CD8-positive, alpha-beta T cell (primary cell): ENCODE measurements at regions of chr19 and their contacts with region 1.

Region 1: DNA sequence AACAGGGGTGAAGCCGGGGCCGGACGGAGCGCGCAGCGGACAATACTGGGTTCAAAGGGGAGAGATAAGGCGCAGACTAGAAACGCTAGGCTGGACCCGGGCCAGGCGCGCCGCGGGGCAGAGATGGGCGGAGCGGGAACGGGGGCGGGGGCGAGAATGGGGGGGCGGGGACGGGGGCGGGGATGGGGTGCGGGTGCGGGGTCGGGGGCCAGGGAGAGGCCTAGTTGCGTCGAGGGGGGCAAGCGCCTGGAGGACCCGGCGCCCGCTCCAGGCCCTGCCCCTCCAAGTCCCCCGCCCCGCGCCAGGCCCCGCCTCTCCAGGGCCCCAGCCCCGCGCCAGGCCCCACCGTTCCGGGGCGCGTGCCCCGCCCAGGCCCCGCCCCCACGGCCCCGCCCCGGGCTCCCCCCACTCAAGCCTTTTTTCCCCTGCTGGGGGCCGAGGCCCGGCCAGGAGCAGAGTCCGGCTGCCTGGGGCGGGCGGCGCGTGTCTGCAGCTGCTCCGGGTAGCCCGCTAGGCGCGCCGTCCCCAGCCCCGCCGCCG is at the start of gene CERS4:
- DNase-seq: peak; percentile 43 to 87 (median 75)
- ATAC-seq: peak; percentile 85
- H3K4me3 ChIP-seq: peak within 1 kb of the TSS; percentile 75 to 86
- H3K4me3 Mint-ChIP-seq: peak within 1 kb of the TSS; percentile 85
- H3K27ac ChIP-seq: peak within 1 kb of the TSS; percentile 51 to 72
- H3K27ac Mint-ChIP-seq: peak within 1 kb of the TSS; percentile 87
- H3K4me1 ChIP-seq: peaks cover 22% of the 10 kb centered on the region
- H3K4me1 Mint-ChIP-seq: peaks cover 26% of the 10 kb centered on the region
- H3K27me3 ChIP-seq: no peaks in the 10 kb centered on the region
- H3K27me3 Mint-ChIP-seq: no peaks in the 10 kb centered on the region
- CTCF ChIP-seq: no peak
- total RNA-seq, gene CERS4: 6.9 to 7.2 TPM

Region 2: DNA sequence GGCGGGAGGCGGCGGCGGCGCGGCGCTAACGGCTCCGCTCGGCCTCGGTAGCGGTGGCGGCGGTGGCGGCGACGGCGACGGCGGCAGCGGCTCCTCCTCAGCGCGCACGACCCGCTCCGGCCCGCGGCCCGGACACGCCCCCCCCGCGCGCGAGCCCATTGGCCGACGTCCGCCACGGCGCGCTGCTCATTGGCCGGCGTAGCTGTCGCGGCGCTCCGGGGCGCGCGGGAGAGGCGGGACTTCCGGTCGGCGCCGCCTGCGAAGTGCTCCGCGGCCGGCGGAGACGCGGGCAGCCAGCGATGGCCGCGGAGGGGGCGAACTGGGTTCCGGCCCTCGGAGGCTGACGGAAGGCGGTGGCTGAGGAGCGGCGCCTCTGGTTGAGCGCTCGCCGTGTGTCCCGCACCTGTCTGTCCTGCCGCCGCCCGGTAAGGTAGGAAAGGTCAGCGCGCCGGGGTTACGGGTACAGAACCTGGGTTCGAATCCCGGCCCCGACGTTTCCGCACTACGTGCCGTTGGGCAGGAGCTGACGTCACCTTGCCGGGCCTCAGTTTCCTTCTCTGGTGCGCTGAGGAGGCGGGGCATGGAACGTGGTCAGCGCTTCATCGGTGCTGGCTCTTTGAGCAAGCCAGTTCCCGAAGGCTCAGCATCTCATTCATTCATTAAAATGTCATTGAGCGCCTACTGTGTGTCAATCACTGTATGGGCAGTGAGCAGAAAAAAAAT is 203.3 kb before region 1 on chr19 and contains the start of gene ELAVL1:
- CTCF ChIA-PET with region 1: interaction called, 6 read pairs
- POLR2A ChIA-PET with region 1: no interaction called
- intact Hi-C with region 1: loop called in 1 of 2 experiments (anchors 1 kb)
- DNase-seq: peak; percentile 78 to 95 (median 87)
- ATAC-seq: peak; percentile 91
- H3K4me3 ChIP-seq: peak within 1 kb of the TSS; percentile 66 to 87
- H3K4me3 Mint-ChIP-seq: peak within 1 kb of the TSS; percentile 85
- H3K27ac ChIP-seq: peak within 1 kb of the TSS; percentile 70
- H3K27ac Mint-ChIP-seq: peak within 1 kb of the TSS; percentile 81
- H3K4me1 ChIP-seq: peaks cover 38% of the 10 kb centered on the region
- H3K4me1 Mint-ChIP-seq: peaks cover 38% of the 10 kb centered on the region
- H3K27me3 ChIP-seq: no peaks in the 10 kb centered on the region
- H3K27me3 Mint-ChIP-seq: no peaks in the 10 kb centered on the region
- CTCF ChIP-seq: no peak
- total RNA-seq, gene ELAVL1: 19.9 to 23.5 TPM

Region 3: GRCh38 chr19:8158411-8159074 is 50.4 kb before region 1 on chr19:
- CTCF ChIA-PET with region 1: interaction called, 4 read pairs
- POLR2A ChIA-PET with region 1: no interaction called
- intact Hi-C with region 1: loop called in 1 of 2 experiments (anchors 1 kb)
- DNase-seq: peak in 7 of 9 experiments; percentile 21 to 84 (median 42)
- ATAC-seq: peak; percentile 40
- H3K4me3 ChIP-seq: no peak overlapping the region
- H3K4me3 Mint-ChIP-seq: no peak overlapping the region
- H3K27ac ChIP-seq: no peak overlapping the region
- H3K27ac Mint-ChIP-seq: no peak overlapping the region
- H3K4me1 ChIP-seq: no peaks in the 10 kb centered on the region
- H3K4me1 Mint-ChIP-seq: no peaks in the 10 kb centered on the region
- H3K27me3 ChIP-seq: peaks cover 0 to 3% of the 10 kb centered on the region in 2 experiments
- H3K27me3 Mint-ChIP-seq: peaks cover 21% of the 10 kb centered on the region
- CTCF ChIP-seq: peak; percentile 62

Region 4: DNA sequence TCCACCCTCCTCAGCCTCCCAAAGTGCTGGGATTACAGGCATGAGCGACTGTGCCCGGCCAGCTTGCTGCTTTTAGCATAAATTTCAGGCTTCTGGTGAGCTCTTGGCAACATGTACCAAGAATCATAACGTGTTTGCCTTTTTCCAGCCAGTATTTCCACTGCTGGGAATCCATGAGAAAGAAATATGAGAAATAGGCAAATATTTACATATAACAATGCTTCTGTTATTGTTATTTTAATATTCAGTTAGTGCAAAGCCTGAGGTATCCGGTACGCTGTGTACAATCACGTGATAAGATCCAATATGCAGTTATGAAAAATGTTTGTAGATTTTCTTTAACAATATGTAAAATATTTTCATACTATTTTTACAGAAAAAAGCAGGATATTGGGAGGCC is 28.9 kb before region 1 on chr19:
- CTCF ChIA-PET with region 1: no interaction called
- POLR2A ChIA-PET with region 1: interaction called, 6 read pairs
- intact Hi-C with region 1: loop called in 1 of 2 experiments (anchors 2 kb)
- DNase-seq: no peak
- ATAC-seq: no peak
- H3K4me3 ChIP-seq: no peak overlapping the region
- H3K4me3 Mint-ChIP-seq: no peak overlapping the region
- H3K27ac ChIP-seq: no peak overlapping the region
- H3K27ac Mint-ChIP-seq: no peak overlapping the region
- H3K4me1 ChIP-seq: peaks cover 14% of the 10 kb centered on the region
- H3K4me1 Mint-ChIP-seq: peaks cover 9% of the 10 kb centered on the region
- H3K27me3 ChIP-seq: no peaks in the 10 kb centered on the region
- H3K27me3 Mint-ChIP-seq: no peaks in the 10 kb centered on the region
- CTCF ChIP-seq: no peak

Region 5: DNA sequence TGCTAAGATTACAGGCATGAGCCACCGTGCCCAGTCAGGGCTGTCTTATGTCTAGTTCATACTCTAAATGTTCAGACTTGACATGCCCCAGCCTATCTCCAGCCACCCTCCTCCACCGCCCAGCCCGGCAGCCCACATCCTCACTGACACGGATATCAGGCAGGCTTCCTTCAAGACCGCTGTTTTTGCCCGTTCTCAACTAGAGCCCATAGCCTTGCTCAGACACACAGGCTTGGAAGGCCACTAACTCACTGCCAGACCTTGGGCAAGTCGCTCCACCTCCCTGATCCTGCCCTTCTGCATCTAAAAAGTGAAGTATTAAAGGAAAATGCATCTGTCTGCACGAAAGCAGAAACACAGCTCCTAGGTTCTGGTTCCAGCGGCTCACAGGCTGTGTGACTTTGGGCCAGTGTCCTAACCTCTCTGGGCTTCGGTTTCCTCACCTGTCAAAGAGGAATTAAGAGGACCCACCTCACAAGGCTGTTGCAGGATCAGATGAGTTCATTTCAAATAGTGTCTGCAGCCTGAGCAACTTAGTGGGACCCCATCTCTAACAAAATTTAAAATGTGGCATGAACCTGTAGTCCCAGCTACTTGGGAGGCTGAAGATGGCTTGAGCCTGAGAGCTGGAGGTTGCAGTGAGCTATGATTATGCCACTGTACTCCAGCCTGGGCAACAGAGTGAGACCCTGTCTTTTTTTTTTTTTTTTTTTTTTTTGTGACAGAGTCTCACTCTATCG is 14.3 kb before region 1 on chr19:
- CTCF ChIA-PET with region 1: interaction called, 6 read pairs
- POLR2A ChIA-PET with region 1: interaction called, 6 read pairs
- intact Hi-C with region 1: loop called in 1 of 2 experiments (anchors 2 kb)
- DNase-seq: peak; percentile 23 to 79 (median 55)
- ATAC-seq: peak; percentile 63
- H3K4me3 ChIP-seq: peak overlapping the region in 1 of 2 experiments; percentile 1
- H3K4me3 Mint-ChIP-seq: peak overlapping the region; percentile 75
- H3K27ac ChIP-seq: peak overlapping the region; percentile 5 to 89
- H3K27ac Mint-ChIP-seq: peak overlapping the region; percentile 93
- H3K4me1 ChIP-seq: peaks cover 33% of the 10 kb centered on the region
- H3K4me1 Mint-ChIP-seq: peaks cover 44% of the 10 kb centered on the region
- H3K27me3 ChIP-seq: no peaks in the 10 kb centered on the region
- H3K27me3 Mint-ChIP-seq: no peaks in the 10 kb centered on the region
- CTCF ChIP-seq: no peak

Region 6: GRCh38 chr19:8321060-8321985 is 112.3 kb after region 1 on chr19 and contains the starts of genes NDUFA7 and RPS28:
- CTCF ChIA-PET with region 1: no interaction called
- POLR2A ChIA-PET with region 1: interaction called, 3 read pairs
- intact Hi-C with region 1: loop called in 1 of 2 experiments (anchors 2 kb)
- DNase-seq: peak; percentile 94 to 99 (median 97)
- ATAC-seq: peak; percentile 93
- H3K4me3 ChIP-seq: peak within 1 kb of the TSS; percentile 81 to 98
- H3K4me3 Mint-ChIP-seq: peak within 1 kb of the TSS; percentile 96
- H3K27ac ChIP-seq: peak within 1 kb of the TSS; percentile 90 to 96
- H3K27ac Mint-ChIP-seq: peak within 1 kb of the TSS; percentile 97
- H3K4me1 ChIP-seq: peaks cover 26% of the 10 kb centered on the region
- H3K4me1 Mint-ChIP-seq: peaks cover 37% of the 10 kb centered on the region
- H3K27me3 ChIP-seq: no peaks in the 10 kb centered on the region
- H3K27me3 Mint-ChIP-seq: no peaks in the 10 kb centered on the region
- CTCF ChIP-seq: no peak
- total RNA-seq, gene NDUFA7: 19.8 to 28.9 TPM
- total RNA-seq, gene RPS28: 3,224 to 3,257 TPM

Region 7: DNA sequence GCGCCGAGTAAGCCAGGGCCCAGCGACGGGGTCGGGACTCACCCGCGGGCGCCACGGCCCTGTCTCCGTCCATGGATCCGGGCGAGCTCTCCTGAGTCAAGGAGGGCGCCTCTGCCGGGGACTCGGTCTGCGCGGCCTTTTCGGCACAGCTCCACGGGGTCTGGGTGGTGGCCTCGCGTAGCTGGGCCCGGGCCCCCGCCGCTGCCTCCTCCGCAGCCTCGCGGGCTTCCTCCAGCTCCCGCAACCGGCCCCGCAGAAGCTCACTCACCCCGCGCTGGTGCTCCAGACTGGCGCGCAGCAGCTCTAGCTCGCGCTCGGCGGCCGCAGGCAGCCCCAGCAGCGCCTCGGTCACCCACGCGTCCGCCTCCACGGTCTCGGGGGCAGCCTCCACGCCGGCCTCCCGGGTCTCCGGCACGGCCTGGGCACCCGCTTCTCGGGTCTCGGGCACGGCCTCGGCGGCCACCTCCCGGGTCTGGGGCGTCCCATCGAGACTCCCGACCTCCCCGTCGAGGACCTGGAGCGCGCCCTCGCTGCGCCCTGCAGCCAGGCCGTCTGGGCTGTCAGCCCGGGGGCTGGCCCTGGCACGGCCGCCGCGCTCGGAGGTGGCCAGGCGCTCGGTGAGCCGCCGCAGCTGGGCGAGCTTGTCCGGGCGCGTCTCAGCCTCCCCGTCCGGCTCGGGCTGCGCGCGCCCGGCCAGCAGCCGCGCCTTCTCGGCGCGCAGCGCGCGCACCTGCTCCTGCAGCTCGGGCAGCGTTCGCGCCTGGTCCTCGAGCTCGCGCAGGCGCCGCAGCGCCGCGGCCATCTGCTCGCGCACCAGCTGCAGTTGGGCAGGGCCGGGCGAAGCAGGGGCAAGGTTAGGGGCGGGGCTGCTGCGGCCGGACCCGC is 125.7 kb after region 1 on chr19:
- CTCF ChIA-PET with region 1: no interaction called
- POLR2A ChIA-PET with region 1: no interaction called
- intact Hi-C with region 1: no loop called
- DNase-seq: peak in 2 of 9 experiments; percentile 47 to 59
- ATAC-seq: peak; percentile 36
- H3K4me3 ChIP-seq: no peak overlapping the region
- H3K4me3 Mint-ChIP-seq: peak overlapping the region; percentile 42
- H3K27ac ChIP-seq: no peak overlapping the region
- H3K27ac Mint-ChIP-seq: no peak overlapping the region
- H3K4me1 ChIP-seq: peaks cover 6% of the 10 kb centered on the region
- H3K4me1 Mint-ChIP-seq: peaks cover 4% of the 10 kb centered on the region
- H3K27me3 ChIP-seq: peaks cover 0 to 11% of the 10 kb centered on the region in 2 experiments
- H3K27me3 Mint-ChIP-seq: peaks cover 24% of the 10 kb centered on the region
- CTCF ChIP-seq: no peak